ENCODE measurements at regions of chr3 and their contacts with region 1.

Region 1: DNA sequence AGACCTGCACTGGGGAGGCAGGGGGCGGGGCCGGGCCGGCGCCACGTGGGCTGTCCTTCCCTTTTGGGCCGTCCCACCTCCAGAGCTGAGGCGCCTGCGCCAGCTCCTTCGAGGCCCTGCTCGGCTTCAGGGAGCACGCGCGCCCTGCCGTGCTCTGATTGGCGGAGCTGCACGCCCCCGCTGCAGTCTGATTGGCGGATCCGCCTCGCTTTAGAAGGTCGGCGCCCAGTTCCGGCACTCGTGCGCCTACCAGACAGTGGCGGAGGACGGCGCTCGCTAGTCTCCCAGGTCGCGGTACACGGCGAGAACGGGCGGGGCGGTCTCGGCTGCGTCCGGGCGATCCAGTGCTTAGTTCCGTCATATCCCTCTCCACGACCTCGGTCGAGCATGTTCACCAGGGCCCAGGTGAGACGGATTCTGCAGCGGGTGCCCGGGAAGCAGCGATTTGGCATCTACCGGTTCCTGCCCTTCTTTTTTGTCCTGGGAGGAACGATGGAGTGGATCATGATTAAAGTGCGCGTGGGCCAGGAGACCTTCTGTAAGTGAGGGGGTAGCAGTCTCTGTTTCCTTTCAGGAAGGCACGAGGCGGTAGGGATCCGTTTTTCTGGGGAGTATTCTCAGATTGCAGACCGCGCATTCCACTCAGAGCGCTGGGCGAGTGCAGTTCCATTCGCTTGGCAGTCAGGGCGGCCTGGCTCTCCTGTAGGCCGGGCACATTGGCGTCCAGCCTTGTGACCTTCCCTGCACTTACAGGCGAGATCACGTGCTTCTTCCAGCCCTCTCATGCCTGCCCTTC is at the start of gene UQCC5:
- DNase-seq: peak; percentile 99
- H3K4me3 ChIP-seq: peak within 1 kb of the TSS; percentile 57 to 84 (median 71)
- H3K27ac ChIP-seq: peak within 1 kb of the TSS; percentile 85 to 93 (median 88)
- H3K4me1 ChIP-seq: peaks cover 0 to 72% (median 54%) of the 10 kb centered on the region in 4 donors
- H3K27me3 ChIP-seq: no peaks in the 10 kb centered on the region
- CTCF ChIP-seq: no peak
- EP300 ChIP-seq: peak in 1 of 4 donors; percentile 24
- POLR2A ChIP-seq: peak; percentile 94 to 96
- total RNA-seq, gene UQCC5: 0.54 to 2.9 (median 1.9) TPM

Region 2: GRCh38 chr3:52352566-52352965 is 184.0 kb before region 1 on chr3:
- intact Hi-C with region 1: no loop called
- DNase-seq: no peak
- H3K4me3 ChIP-seq: no peak overlapping the region
- H3K27ac ChIP-seq: no peak overlapping the region
- H3K4me1 ChIP-seq: no peaks in the 10 kb centered on the region
- H3K27me3 ChIP-seq: no peaks in the 10 kb centered on the region
- CTCF ChIP-seq: no peak
- EP300 ChIP-seq: no peak
- POLR2A ChIP-seq: no peak

Region 3: DNA sequence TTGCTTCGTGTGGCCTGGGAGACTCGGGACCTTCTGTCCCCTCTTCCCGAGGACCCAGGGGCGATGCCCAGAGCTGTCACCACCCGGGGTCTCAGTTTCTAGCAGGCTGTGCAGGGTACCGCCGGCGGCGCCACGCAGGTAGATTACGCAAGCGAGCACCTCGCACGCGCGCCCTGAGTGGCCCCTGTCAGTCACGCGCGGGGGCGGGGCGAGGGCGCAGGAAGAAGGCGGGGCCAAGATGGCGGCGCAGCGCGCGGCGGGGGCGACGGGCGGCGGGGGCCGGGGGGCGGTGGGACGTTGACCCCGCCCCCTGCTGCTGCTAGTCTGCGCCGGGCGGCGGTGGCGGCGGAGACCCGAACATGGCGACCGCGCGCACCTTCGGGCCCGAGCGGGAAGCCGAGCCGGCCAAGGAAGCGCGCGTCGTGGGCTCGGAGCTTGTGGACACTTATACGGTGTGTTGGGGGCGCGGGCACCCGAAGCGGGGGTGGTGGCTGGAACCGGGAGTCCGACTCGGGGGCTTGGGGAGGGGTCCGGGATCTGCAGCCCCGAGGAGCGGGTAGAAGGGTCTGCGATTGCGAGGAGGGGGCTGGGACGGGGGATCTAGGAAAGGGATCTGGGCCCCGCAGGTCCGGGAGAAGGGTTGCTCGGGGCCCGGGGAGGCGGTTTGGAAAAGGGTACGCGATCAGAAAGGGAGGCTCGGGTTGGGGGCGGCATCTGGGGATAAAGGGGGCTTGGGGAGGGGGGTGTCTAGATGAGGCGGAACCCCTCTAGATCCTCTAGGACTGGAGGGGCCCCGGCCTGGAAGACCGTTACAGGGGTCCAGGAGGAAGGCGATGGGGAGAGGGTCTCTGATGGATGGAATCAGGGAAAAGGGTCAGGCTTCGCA is 81.0 kb before region 1 on chr3 and contains the start of gene NISCH:
- intact Hi-C with region 1: loop called (anchors 5 kb)
- DNase-seq: peak; percentile 94
- H3K4me3 ChIP-seq: peak within 1 kb of the TSS; percentile 95 to 96 (median 96)
- H3K27ac ChIP-seq: peak within 1 kb of the TSS; percentile 93 to 95 (median 94)
- H3K4me1 ChIP-seq: peaks cover 0 to 31% (median 27%) of the 10 kb centered on the region in 4 donors
- H3K27me3 ChIP-seq: no peaks in the 10 kb centered on the region
- CTCF ChIP-seq: no peak
- EP300 ChIP-seq: no peak
- POLR2A ChIP-seq: peak; percentile 19 to 75
- total RNA-seq, gene NISCH: 53.5 to 113 (median 68.4) TPM

Region 4: DNA sequence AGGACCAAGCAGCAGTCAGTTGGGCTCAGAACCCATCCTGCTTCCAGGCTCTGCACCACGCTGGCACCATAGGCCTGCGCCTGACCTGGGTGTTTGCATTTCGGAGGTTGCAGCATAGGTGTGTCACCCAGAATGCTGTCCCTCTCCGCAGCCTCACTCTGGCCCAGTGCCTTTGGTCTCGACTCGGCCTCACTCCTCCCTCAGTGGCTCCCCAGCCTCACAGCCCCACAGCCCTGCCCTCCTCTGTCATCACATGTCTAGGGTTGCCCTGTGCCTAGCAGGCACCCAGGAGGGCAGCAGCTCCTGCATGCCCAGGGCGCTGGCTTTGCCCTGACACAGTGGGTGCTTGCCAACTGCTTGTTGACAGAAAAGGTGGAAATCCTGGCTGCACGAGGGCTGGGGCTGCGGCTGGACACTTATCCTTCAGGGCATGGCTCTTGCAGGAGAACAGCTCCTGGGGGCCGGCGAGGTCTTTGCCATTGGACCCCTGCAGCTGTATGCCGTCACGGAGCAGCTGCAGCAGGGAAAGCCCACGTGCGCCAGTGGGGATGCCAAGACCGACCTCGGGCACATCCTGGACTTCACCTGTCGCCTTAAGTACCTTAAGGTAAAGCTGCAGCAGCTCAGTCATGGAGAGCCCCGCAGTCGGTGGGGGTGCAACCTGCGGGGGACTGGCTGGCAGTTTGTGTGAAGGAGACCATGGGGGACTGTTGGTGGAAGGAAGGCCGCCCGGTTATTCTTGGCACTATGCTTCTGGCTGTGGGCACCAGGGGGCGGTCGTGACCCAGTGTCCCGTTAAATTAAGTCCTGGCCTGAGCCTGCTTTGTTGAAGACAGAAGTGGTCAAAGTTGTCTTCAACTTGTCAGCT is 65.0 kb before region 1 on chr3:
- intact Hi-C with region 1: loop called (anchors 5 kb)
- DNase-seq: no peak
- H3K4me3 ChIP-seq: no peak overlapping the region
- H3K27ac ChIP-seq: no peak overlapping the region
- H3K4me1 ChIP-seq: peaks cover 0 to 23% (median 11%) of the 10 kb centered on the region in 4 donors
- H3K27me3 ChIP-seq: no peaks in the 10 kb centered on the region
- CTCF ChIP-seq: peak in 3 of 4 experiments; percentile 31 to 61 (median 43)
- EP300 ChIP-seq: no peak
- POLR2A ChIP-seq: no peak

Region 5: GRCh38 chr3:52705688-52706686 is 169.4 kb after region 1 on chr3 and contains the starts of genes GLT8D1 and SPCS1:
- intact Hi-C with region 1: loop called (anchors 5 kb)
- DNase-seq: peak; percentile 89
- H3K4me3 ChIP-seq: peak within 1 kb of the TSS; percentile 63 to 84 (median 68)
- H3K27ac ChIP-seq: peak within 1 kb of the TSS; percentile 86 to 91 (median 88)
- H3K4me1 ChIP-seq: peaks cover 0 to 42% (median 33%) of the 10 kb centered on the region in 4 donors
- H3K27me3 ChIP-seq: no peaks in the 10 kb centered on the region
- CTCF ChIP-seq: no peak
- EP300 ChIP-seq: no peak
- POLR2A ChIP-seq: peak; percentile 53 to 63
- total RNA-seq, gene GLT8D1: 31.5 to 47.4 (median 35.7) TPM
- total RNA-seq, gene SPCS1: 62.0 to 140 (median 109) TPM

Measured in sigmoid colon (tissue), 7 donors.